ENCODE measurements at regions of chr9 and their contacts with region 1.

Region 1: GRCh38 chr9:136551401-136552116 is 5.7 kb upstream of the NOTCH1 start:
- DNase-seq: no peak
- H3K4me3 ChIP-seq: no peak overlapping the region
- CTCF ChIP-seq: no peak

Region 2: GRCh38 chr9:136671646-136672430 is 120.3 kb after region 1 on chr9:
- in situ Hi-C with region 1: loop called (anchors 10 kb)
- DNase-seq: no peak
- H3K4me3 ChIP-seq: no peak overlapping the region
- CTCF ChIP-seq: peak; percentile 90

Measured in astrocyte of the cerebellum (primary cell).